ENCODE measurements at regions of chr1 and their contacts with region 1.

Region 1: GRCh38 chr1:244047621-244048471 is 3.2 kb upstream of the ZBTB18 start:
- DNase-seq: peak; percentile 98
- H3K4me3 Mint-ChIP-seq: peak overlapping the region; percentile 86
- H3K27ac Mint-ChIP-seq: peak overlapping the region; percentile 86
- H3K4me1 Mint-ChIP-seq: peaks cover 12% of the 10 kb centered on the region
- H3K27me3 Mint-ChIP-seq: no peaks in the 10 kb centered on the region
- CTCF ChIP-seq: no peak

Region 2: GRCh38 chr1:243842978-243843511 is 204.8 kb before region 1 on chr1:
- CTCF ChIA-PET with region 1: no interaction called
- intact Hi-C with region 1: loop called (anchors 5 kb)
- DNase-seq: peak; percentile 43
- H3K4me3 Mint-ChIP-seq: peak overlapping the region; percentile 69
- H3K27ac Mint-ChIP-seq: peak overlapping the region; percentile 97
- H3K4me1 Mint-ChIP-seq: peaks cover 36% of the 10 kb centered on the region
- H3K27me3 Mint-ChIP-seq: no peaks in the 10 kb centered on the region
- CTCF ChIP-seq: no peak

Region 3: GRCh38 chr1:244074559-244075171 is 26.8 kb after region 1 on chr1:
- CTCF ChIA-PET with region 1: no interaction called
- intact Hi-C with region 1: no loop called
- DNase-seq: peak; percentile 30
- H3K4me3 Mint-ChIP-seq: peak overlapping the region; percentile 31
- H3K27ac Mint-ChIP-seq: no peak overlapping the region
- H3K4me1 Mint-ChIP-seq: peaks cover 24% of the 10 kb centered on the region
- H3K27me3 Mint-ChIP-seq: peaks cover 17% of the 10 kb centered on the region
- CTCF ChIP-seq: no peak

Region 4: GRCh38 chr1:244116946-244117345 is 69.1 kb after region 1 on chr1:
- CTCF ChIA-PET with region 1: no interaction called
- intact Hi-C with region 1: loop called (anchors 2 kb)
- DNase-seq: no peak
- H3K4me3 Mint-ChIP-seq: no peak overlapping the region
- H3K27ac Mint-ChIP-seq: no peak overlapping the region
- H3K4me1 Mint-ChIP-seq: peaks cover 23% of the 10 kb centered on the region
- H3K27me3 Mint-ChIP-seq: peaks cover 24% of the 10 kb centered on the region
- CTCF ChIP-seq: no peak

Region 5: GRCh38 chr1:244150665-244151064 is 102.8 kb after region 1 on chr1:
- CTCF ChIA-PET with region 1: no interaction called
- intact Hi-C with region 1: no loop called
- DNase-seq: no peak
- H3K4me3 Mint-ChIP-seq: no peak overlapping the region
- H3K27ac Mint-ChIP-seq: no peak overlapping the region
- H3K4me1 Mint-ChIP-seq: no peaks in the 10 kb centered on the region
- H3K27me3 Mint-ChIP-seq: no peaks in the 10 kb centered on the region
- CTCF ChIP-seq: no peak

Region 6: GRCh38 chr1:244163861-244164562 is 116.2 kb after region 1 on chr1:
- CTCF ChIA-PET with region 1: no interaction called
- intact Hi-C with region 1: loop called (anchors 1 kb)
- DNase-seq: peak; percentile 67
- H3K4me3 Mint-ChIP-seq: no peak overlapping the region
- H3K27ac Mint-ChIP-seq: no peak overlapping the region
- H3K4me1 Mint-ChIP-seq: peaks cover 21% of the 10 kb centered on the region
- H3K27me3 Mint-ChIP-seq: no peaks in the 10 kb centered on the region
- CTCF ChIP-seq: no peak

Region 7: GRCh38 chr1:244214009-244214967 is 166.4 kb after region 1 on chr1:
- CTCF ChIA-PET with region 1: no interaction called
- intact Hi-C with region 1: loop called (anchors 5 kb)
- DNase-seq: peak; percentile 85
- H3K4me3 Mint-ChIP-seq: peak overlapping the region; percentile 25
- H3K27ac Mint-ChIP-seq: peak overlapping the region; percentile 86
- H3K4me1 Mint-ChIP-seq: peaks cover 29% of the 10 kb centered on the region
- H3K27me3 Mint-ChIP-seq: no peaks in the 10 kb centered on the region
- CTCF ChIP-seq: no peak

Measured in Calu3 (cell line).